GM13977 (cell line): ENCODE measurements at regions of chr4 and their contacts with region 1.

Region 1: DNA sequence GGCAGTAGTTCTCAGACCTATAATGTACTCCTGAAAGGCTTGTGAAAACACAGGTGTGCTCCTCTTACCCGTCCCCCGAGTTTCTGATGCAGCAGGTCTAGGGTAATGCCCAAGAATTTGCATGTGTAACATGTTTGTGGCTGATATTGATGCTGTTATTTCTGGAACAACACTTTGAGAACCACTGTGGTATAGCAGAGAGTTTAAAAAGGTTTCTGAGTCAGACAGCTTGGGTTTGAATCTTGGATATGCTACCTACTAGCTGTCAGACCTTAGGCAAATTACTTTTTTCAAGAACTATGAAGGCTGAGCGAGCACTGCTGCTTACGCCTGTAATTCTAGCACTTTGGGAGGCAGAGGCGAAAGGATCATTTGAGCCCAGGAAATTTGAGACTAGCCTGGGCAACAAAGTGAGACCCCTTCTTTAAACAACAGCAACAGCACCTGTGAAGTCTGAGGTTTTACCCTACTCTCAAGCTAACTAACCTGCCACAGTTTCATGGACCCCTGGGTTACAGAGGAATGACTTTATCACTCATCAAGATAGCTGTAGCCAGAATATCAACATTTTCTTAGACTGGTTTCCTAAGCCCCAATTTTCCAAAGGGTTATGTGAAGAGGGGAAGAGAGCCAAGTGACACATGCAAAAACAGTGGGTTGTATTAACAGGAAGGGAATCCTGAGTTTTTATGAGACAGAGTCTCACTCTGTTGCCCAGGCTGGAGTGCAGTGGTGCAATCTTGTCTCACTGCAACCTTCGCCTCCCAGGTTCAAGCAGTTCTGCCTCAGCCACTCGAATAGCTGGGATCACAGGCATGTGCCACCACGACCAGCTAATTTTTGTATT is 5.1 kb downstream of the AFF1 start:
- DNase-seq: peak; percentile 69
- CTCF ChIP-seq: no peak

Region 2: GRCh38 chr4:86593688-86594558 is 346.0 kb before region 1 on chr4 and contains the start of gene PTPN13:
- in situ Hi-C with region 1: no loop called
- DNase-seq: peak; percentile 94
- CTCF ChIP-seq: peak; percentile 11

Region 3: GRCh38 chr4:87006676-87007527 is 67.0 kb after region 1 on chr4:
- in situ Hi-C with region 1: loop called (anchors 10 kb)
- DNase-seq: peak; percentile 83
- CTCF ChIP-seq: peak; percentile 21